ENCODE measurements at regions of chr2 and their contacts with region 1.

Region 1: DNA sequence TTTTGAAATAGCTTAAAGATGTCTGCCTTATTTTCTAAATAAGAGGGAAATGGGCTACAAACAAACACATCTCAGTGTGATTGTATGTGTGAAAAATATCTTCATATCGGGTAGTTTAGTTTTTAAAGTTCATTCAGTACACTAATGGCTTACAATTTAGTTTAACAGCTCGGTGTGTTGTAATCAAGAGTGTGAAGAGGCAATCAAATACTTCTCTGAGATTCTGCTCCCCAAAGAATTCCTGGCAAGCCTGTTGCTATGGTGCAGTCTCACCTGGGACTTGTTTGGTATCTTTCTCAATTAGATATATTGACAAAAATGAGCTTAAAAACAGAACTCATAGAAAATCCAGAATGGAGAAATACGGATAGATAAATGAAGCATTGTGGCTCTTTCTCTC is 99.4 kb downstream of the PKP4 start:
- DNase-seq: no peak
- CTCF ChIP-seq: no peak

Region 2: DNA sequence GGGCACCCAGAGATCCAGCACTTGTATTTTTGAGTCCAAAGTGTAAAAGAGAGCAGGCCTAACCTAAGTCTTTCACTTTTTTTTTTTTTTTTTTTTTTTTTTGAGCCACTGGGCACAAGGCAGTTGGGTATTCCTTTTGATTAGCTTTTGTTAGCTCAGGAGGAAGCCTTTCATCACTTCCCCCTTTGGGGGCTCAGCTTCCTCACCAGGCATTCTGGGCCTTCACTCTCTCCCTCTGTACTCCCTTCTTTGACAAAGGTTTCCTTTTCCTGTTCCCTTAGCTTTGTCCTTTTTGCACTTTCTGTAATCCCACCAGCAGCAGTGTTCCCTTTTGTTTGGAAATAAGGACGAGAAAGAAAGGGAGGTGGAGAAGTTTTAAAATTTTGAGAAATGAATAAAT is 11.1 kb before region 1 on chr2:
- CTCF ChIA-PET with region 1: interaction called, 11 read pairs
- POLR2A ChIA-PET with region 1: no interaction called
- DNase-seq: no peak
- CTCF ChIP-seq: no peak

Measured in GM10248 (cell line).